Heart right ventricle (tissue), 16 donors: ENCODE measurements at regions of chr13 and their contacts with region 1.

Region 1: GRCh38 chr13:39119422-39119821 is 81.2 kb downstream of the NHLRC3 start:
- DNase-seq: no peak
- ATAC-seq: no peak
- H3K4me3 ChIP-seq: no peak overlapping the region
- H3K27ac ChIP-seq: no peak overlapping the region
- H3K4me1 ChIP-seq: no peaks in the 10 kb centered on the region
- H3K27me3 ChIP-seq: no peaks in the 10 kb centered on the region
- CTCF ChIP-seq: no peak

Region 2: GRCh38 chr13:39051157-39051556 is 68.3 kb before region 1 on chr13:
- intact Hi-C with region 1: no loop called
- DNase-seq: no peak
- ATAC-seq: peak in 1 of 8 donors; percentile 46
- H3K4me3 ChIP-seq: no peak overlapping the region
- H3K27ac ChIP-seq: no peak overlapping the region
- H3K4me1 ChIP-seq: peaks cover 0 to 3% (median 0%) of the 10 kb centered on the region in 9 donors
- H3K27me3 ChIP-seq: no peaks in the 10 kb centered on the region
- CTCF ChIP-seq: peak; percentile 26 to 73 (median 56)

Region 3: GRCh38 chr13:39091586-39091985 is 27.8 kb before region 1 on chr13:
- intact Hi-C with region 1: loop called in 1 of 10 experiments (anchors 2 kb)
- DNase-seq: no peak
- ATAC-seq: no peak
- H3K4me3 ChIP-seq: no peak overlapping the region
- H3K27ac ChIP-seq: no peak overlapping the region
- H3K4me1 ChIP-seq: no peaks in the 10 kb centered on the region
- H3K27me3 ChIP-seq: no peaks in the 10 kb centered on the region
- CTCF ChIP-seq: no peak